Activated T-helper 2 cell treated with anti-CD3 and anti-CD28 coated beads, Interferon-gamma antibody, Interleukin-2, Interleukin-4, amounts not matched to agents 10 μg/mL and 5 μg/mL and 100 μg/mL, durations not matched to agents 14 hours and 24 hours and 36 hours (primary cell): ENCODE measurements at regions of chr12 and their contacts with region 1.

Region 1: DNA sequence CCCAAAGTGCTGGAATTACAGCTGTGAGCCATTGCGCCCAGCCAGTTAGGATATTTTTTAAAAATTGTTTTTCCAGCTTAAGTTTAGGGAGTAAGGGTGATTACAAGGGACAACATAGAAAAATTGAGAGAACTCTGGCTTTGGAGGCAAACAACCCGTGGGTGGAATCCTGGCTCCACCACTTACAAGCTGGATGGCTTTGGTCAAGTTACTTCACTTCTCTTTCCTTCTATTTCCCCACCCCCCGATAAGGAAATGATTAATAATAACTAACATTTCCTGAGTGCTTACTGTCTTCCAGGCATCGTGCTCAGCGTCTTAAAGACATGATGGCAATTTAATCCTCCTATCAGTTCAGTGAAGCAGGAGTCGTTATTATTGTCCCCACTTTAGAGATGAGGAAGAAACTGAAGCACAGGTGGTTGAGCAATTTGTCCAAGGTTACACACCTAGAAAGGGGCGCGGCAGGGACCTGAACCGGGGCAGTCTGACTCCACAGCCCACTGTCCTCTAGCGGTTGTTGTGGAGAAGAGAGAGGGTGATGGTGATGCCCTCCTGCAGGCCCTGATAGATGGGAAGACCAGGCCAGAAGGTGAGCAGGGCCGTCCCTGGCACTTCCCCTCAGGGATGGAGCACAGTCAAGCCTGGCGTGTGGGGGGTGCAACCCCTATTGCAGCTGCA is 16.7 kb upstream of the FAIM2 start:
- DNase-seq: no peak
- H3K4me3 Mint-ChIP-seq: no peak overlapping the region
- H3K27ac Mint-ChIP-seq: no peak overlapping the region
- H3K4me1 Mint-ChIP-seq: no peaks in the 10 kb centered on the region
- H3K27me3 Mint-ChIP-seq: peaks cover 4% of the 10 kb centered on the region

Region 2: DNA sequence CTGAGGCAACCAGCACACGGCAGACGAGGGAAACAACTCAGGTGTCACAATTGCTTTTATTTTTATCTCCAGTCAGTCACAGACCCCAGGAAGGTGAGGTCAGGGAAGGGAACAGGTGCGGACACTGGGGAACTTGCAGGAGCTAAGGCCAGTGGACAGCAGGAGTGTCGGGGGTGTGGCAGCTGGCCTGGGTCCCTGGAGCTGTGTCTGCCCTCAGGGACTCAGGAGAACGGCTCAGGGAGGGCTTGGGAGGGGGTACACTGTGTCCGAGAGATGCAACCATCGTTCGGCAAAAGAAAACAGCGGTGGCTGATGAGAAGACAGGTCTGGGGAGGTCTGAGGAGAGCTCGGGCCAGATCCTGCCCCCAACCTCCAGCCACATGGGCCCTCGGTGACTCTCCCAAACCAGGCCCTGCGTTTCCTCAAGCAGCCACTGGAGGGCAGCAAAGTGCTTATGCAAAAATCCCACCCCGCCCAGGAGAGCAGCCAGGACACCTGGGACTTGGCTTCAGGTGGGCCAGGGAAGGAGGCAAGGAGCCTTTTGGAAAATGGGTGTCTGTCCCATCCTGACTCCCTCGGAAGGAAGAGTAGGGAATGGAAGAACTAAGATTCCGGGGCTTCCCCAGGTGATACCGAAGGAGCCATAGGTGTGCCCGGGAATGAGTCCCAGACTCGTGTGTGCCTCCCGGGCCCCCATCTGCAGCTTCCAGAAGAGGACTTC is 53.4 kb before region 1 on chr12:
- intact Hi-C with region 1: loop called (anchors 10 kb)
- DNase-seq: peak; percentile 59
- H3K4me3 Mint-ChIP-seq: no peak overlapping the region
- H3K27ac Mint-ChIP-seq: no peak overlapping the region
- H3K4me1 Mint-ChIP-seq: no peaks in the 10 kb centered on the region
- H3K27me3 Mint-ChIP-seq: no peaks in the 10 kb centered on the region

Region 3: DNA sequence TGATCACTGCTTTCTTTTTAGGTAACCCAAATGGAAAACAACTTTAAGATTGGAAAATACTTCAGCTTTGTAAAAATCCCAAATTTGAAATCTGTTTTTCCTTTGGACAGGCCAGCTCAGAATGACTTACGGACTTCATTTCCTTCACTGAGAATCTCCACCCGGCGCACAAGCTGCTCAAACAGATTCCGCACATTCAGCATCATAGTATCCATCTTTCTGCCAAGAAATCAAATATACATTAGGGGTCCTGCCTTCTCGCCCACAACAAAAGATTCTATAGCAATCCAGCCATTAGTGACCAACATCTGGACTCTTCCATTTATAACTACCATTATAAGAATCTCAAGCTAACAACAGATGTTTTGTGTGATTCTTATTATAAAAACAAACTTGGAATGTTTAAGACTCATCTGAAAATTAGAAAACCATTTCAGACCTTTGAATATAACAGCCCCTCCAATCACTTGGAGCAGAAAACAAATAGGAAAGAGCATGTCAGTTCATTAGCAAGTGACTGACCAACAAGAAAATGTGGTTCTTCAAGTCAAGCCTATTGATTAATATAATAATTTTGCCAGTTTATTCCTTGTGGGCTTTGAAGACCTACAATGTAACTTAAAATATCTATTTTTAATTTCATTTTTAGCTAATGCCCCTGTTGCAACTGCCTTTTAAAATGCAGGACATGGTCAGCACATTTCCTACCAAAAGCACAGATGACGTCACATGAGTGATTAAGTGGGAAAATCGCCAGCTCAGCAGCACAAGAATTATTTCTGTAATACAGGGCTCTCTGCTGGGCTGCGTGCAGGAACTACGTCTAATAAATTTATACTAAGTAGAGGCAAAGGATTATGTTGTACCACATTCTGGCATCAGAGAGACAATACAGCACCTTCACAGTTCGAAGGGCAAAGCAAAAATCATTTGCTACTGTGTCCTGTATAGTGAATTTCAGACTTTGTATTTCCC is 96.4 kb after region 1 on chr12:
- intact Hi-C with region 1: no loop called
- DNase-seq: no peak
- H3K4me3 Mint-ChIP-seq: no peak overlapping the region
- H3K27ac Mint-ChIP-seq: no peak overlapping the region
- H3K4me1 Mint-ChIP-seq: peaks cover 35% of the 10 kb centered on the region
- H3K27me3 Mint-ChIP-seq: no peaks in the 10 kb centered on the region